Spleen (tissue), 13 donors: ENCODE measurements at regions of chr2 and their contacts with region 1.

Region 1: GRCh38 chr2:113370478-113371091 is 66.9 kb upstream of the ZNG1B start:
- DNase-seq: no peak
- H3K4me3 ChIP-seq: no peak overlapping the region
- H3K27ac ChIP-seq: no peak overlapping the region
- H3K4me1 ChIP-seq: peaks cover 0 to 11% (median 4%) of the 10 kb centered on the region in 6 donors
- H3K27me3 ChIP-seq: no peaks in the 10 kb centered on the region
- CTCF ChIP-seq: peak; percentile 33 to 82 (median 64)
- POLR2A ChIP-seq: no peak

Region 2: DNA sequence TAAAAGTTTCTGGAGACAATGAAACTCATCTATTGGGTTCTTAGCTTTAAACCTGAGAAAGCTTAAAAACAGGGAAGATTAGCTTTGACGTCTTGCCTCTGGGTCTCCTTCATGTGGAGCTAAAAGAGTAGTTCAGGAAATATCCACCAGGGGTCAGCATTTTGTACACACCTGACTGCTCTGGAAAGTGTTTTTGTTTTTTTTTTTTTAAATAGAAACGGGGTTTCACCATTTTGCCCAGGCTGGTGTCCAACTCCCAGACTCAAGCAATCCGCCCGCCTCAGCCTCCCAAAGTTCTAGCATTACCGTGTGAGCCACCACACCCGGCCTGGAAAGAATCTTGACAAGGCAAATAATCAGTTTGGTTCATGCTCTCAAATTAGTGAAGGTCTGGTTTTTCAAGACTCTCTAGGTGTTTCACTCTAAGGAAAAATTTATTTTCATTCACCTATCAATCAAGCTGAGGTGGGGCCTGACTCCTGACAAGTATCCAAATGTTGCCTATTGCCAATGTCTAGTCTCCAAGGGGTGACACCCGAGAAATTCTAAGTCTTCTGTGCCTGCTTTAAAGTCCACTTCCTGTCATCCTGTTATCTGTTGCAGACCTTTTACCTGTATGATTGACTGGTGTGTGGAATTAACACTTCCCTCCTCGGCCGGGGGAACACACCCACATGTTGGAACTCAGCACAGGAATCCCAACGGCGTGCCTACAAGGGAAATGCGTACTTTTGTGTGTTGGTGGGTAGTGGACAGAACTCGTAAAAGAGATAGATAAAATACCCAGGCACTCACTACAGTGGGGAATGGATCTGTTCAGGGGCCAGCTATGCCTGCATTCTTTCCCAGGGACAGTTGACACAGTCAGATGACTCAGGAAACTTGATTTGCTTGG is 231.9 kb before region 1 on chr2:
- intact Hi-C with region 1: loop called (anchors 5 kb)
- DNase-seq: no peak
- H3K4me3 ChIP-seq: peak overlapping the region in 1 of 8 donors; percentile 29
- H3K27ac ChIP-seq: peak overlapping the region in 3 of 8 donors; percentile 37 to 40 (median 37)
- H3K4me1 ChIP-seq: peaks cover 0 to 25% (median 9%) of the 10 kb centered on the region in 6 donors
- H3K27me3 ChIP-seq: no peaks in the 10 kb centered on the region
- CTCF ChIP-seq: peak; percentile 82 to 93 (median 85)
- POLR2A ChIP-seq: no peak

Region 3: DNA sequence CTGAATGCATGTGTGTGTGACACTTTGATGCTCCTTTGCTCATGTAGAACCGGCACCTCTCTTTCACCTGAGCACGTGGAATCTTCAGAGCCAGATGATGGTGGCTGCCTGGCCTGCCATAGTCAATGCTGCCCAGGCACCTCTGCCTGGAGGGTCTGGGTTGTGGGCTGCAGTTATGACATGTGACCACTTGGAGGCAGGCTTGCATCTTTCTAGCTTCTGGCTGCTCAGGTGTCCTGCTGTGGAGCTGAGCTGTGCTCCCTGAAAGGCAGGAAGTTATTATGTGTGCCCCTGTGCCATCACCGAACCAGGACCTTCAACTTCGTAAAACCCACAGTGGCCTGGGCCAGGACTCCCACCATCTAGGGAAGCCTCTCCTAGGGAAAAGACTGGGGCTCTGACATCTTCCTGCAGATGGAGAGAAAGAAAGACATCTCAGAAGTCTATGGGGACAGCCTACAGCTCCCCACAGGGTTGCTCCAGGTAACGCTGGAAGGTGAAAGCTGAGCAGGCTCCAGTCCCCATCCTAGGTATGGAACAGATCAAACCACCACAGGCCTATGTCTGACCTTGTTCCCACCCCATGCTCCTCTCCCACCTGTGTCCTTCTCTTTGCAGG is 166.6 kb before region 1 on chr2:
- intact Hi-C with region 1: loop called (anchors 5 kb)
- DNase-seq: peak; percentile 87
- H3K4me3 ChIP-seq: no peak overlapping the region
- H3K27ac ChIP-seq: peak overlapping the region in 5 of 8 donors; percentile 3 to 66 (median 60)
- H3K4me1 ChIP-seq: peaks cover 0 to 31% (median 14%) of the 10 kb centered on the region in 6 donors
- H3K27me3 ChIP-seq: no peaks in the 10 kb centered on the region
- CTCF ChIP-seq: peak; percentile 79 to 94 (median 88)
- POLR2A ChIP-seq: no peak

Region 4: GRCh38 chr2:113248997-113249770 is 121.4 kb before region 1 on chr2:
- intact Hi-C with region 1: loop called (anchors 5 kb)
- DNase-seq: peak; percentile 89
- H3K4me3 ChIP-seq: no peak overlapping the region
- H3K27ac ChIP-seq: no peak overlapping the region
- H3K4me1 ChIP-seq: peaks cover 5 to 38% (median 19%) of the 10 kb centered on the region in 6 donors
- H3K27me3 ChIP-seq: no peaks in the 10 kb centered on the region
- CTCF ChIP-seq: peak; percentile 71 to 93 (median 90)
- POLR2A ChIP-seq: no peak